Panc1 (cell line): ENCODE measurements at regions of chr7 and their contacts with region 1.

Region 1: GRCh38 chr7:151315038-151315655 is 26.5 kb upstream of the NUB1 start:
- DNase-seq: peak; percentile 50
- ATAC-seq: peak; percentile 89
- H3K4me3 ChIP-seq: no peak overlapping the region
- H3K27ac ChIP-seq: no peak overlapping the region
- H3K4me1 ChIP-seq: peaks cover 6% of the 10 kb centered on the region
- H3K27me3 ChIP-seq: no peaks in the 10 kb centered on the region
- CTCF ChIP-seq: peak; percentile 85

Region 2: GRCh38 chr7:151172273-151173141 is 142.6 kb before region 1 on chr7:
- CTCF ChIA-PET with region 1: no interaction called
- POLR2A ChIA-PET with region 1: no interaction called
- in situ Hi-C with region 1: no loop called
- intact Hi-C with region 1: no loop called
- DNase-seq: peak; percentile 54
- ATAC-seq: peak; percentile 78
- H3K4me3 ChIP-seq: no peak overlapping the region
- H3K27ac ChIP-seq: no peak overlapping the region
- H3K4me1 ChIP-seq: no peaks in the 10 kb centered on the region
- H3K27me3 ChIP-seq: peaks cover 21% of the 10 kb centered on the region
- CTCF ChIP-seq: peak; percentile 100

Region 3: DNA sequence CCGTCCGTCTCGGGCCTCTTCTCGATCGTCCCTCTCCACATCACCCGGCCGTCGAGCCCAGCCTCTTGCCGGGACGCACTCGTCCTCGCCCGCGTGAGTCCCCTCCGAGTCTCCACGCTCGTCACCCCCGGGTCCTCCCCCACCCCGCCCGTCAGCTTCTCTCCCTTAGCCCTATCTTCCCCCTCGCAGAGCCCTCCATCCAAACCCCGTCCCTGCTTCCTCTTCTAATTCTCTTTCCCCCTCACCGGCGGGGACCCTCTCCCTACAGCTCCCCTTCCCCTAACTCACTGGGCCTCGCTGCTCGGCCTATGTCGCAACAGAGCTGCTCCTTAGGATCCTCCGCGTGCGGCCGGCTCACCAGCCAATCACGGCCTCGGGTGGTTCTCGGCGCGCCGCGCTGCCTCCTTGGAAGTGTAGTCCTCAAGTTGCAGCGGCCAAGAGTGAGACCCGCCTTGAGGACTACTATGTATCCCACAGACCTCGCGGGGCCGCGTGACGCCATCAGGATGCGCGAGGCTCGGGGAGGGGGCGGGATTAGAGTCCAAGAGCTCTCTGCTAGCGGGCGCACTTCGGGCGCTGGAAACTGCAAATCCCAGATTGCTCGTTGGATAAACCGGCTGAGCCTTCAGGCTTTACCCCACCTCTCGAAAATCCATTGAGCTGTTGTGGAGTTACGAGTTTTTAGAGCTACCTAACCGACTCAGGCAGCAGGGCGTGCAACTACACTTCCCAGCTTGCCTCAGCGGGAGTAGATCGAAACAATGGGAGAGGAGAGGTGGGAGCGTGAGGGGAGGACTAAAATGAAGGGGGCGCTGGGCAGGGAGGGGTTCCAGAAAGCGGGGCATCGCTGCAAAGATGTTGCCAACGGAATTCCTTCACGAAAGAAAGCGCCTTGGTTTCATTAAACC is 88.0 kb before region 1 on chr7 and contains the start of gene ABCF2:
- CTCF ChIA-PET with region 1: no interaction called
- POLR2A ChIA-PET with region 1: no interaction called
- in situ Hi-C with region 1: no loop called
- intact Hi-C with region 1: no loop called
- DNase-seq: peak; percentile 98
- ATAC-seq: peak; percentile 100
- H3K4me3 ChIP-seq: peak within 1 kb of the TSS; percentile 88 to 89
- H3K27ac ChIP-seq: peak within 1 kb of the TSS; percentile 89
- H3K4me1 ChIP-seq: peaks cover 19% of the 10 kb centered on the region
- H3K27me3 ChIP-seq: no peaks in the 10 kb centered on the region
- CTCF ChIP-seq: no peak
- total RNA-seq, gene ABCF2: 64.4 TPM

Region 4: DNA sequence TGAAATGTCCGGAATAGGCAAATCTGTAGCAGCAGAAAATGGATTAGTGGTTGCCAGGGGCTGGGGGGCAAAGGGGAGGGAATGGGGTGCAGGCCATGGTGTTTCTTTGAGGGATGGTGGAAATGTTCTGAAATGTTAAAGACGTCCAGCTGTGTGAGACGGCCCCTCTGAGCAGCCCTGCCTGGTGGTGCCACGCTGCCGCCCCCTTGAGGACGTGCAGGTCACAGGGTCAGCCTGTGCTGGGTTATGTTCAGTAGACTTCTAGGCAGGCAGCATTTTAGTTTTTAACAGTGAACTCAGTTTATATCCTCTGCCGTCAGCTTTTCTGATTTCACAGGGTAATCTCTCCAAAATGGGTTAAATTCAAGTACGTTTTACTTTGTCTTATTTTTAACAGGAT is 35.9 kb after region 1 on chr7:
- CTCF ChIA-PET with region 1: interaction called, 6 read pairs
- POLR2A ChIA-PET with region 1: no interaction called
- in situ Hi-C with region 1: no loop called
- intact Hi-C with region 1: loop called (anchors 1 kb)
- DNase-seq: no peak
- ATAC-seq: peak; percentile 71
- H3K4me3 ChIP-seq: no peak overlapping the region
- H3K27ac ChIP-seq: no peak overlapping the region
- H3K4me1 ChIP-seq: peaks cover 9% of the 10 kb centered on the region; the same call in 1 of the 2 replicates
- H3K27me3 ChIP-seq: no peaks in the 10 kb centered on the region
- CTCF ChIP-seq: no peak; the same call in 1 of the 2 replicates

Region 5: DNA sequence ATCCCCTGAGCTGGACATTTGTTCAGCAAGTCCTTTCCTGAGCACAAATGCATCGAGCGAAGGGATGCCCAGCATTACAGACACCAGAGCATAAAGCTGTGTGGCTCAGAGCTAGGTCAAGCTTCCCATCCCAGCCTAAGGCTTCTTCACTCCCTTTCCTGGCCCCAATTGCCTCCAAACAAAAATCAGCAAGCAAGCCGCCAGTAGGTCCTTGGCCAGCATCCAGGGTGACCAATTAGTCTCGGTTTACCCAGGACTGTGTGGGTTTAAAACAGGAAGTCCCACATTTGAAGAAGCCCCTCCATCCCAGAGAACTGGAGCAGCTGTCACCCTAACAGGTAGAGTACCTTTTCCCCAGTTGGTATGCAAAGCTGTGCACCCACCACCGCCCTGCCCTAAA is 510.6 kb after region 1 on chr7:
- CTCF ChIA-PET with region 1: no interaction called
- POLR2A ChIA-PET with region 1: interaction called, 10 read pairs
- in situ Hi-C with region 1: no loop called
- intact Hi-C with region 1: no loop called
- DNase-seq: no peak
- ATAC-seq: no peak
- H3K4me3 ChIP-seq: no peak overlapping the region
- H3K27ac ChIP-seq: no peak overlapping the region
- H3K4me1 ChIP-seq: no peaks in the 10 kb centered on the region
- H3K27me3 ChIP-seq: peaks cover 4% of the 10 kb centered on the region; the same call in 1 of the 2 replicates
- CTCF ChIP-seq: no peak